ENCODE measurements at regions of chr14 and their contacts with region 1.

Region 1: GRCh38 chr14:47917345-47917954 is 242.0 kb upstream of the MDGA2 start:
- DNase-seq: no peak
- ATAC-seq: no peak
- H3K4me3 ChIP-seq: no peak overlapping the region
- H3K27ac ChIP-seq: no peak overlapping the region
- H3K4me1 ChIP-seq: no peaks in the 10 kb centered on the region
- H3K27me3 ChIP-seq: no peaks in the 10 kb centered on the region

Region 2: GRCh38 chr14:47179906-47180305 is 737.5 kb before region 1 on chr14:
- intact Hi-C with region 1: no loop called
- DNase-seq: no peak
- ATAC-seq: no peak
- H3K4me3 ChIP-seq: no peak overlapping the region
- H3K27ac ChIP-seq: no peak overlapping the region
- H3K4me1 ChIP-seq: no peaks in the 10 kb centered on the region
- H3K27me3 ChIP-seq: no peaks in the 10 kb centered on the region

Region 3: GRCh38 chr14:47389535-47389934 is 527.9 kb before region 1 on chr14:
- intact Hi-C with region 1: no loop called
- DNase-seq: no peak
- ATAC-seq: no peak
- H3K4me3 ChIP-seq: no peak overlapping the region
- H3K27ac ChIP-seq: no peak overlapping the region
- H3K4me1 ChIP-seq: no peaks in the 10 kb centered on the region
- H3K27me3 ChIP-seq: no peaks in the 10 kb centered on the region

Region 4: DNA sequence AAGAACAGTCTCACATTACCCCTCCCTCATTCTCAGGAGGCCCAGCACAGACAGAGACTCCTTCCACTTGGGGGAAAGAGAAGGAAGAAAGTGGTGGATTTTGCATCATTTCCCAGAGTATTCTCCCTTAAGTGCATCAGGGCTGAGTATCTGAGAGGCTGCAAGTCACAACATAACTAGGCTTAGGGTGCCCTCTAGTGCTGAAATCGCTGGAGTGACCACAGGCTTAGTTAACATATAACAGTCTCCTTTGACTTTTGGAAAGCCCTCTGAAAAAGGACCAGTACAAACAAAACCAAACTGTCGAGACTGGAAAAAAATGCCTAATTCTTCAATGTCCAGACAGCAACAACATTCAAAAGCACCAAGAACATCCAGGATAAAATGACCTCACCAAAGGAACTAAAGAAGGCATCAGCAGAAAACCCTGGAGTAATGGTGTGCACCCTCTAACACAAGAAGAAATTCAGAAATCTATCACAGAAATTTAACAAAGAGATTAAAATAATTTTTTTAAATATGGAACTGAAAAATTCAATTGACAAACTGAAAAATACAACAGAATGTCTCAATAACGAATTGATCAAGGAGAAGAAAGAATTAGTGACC is 1256.4 kb after region 1 on chr14:
- intact Hi-C with region 1: loop called in 1 of 2 experiments (anchors 5 kb)
- DNase-seq: no peak
- ATAC-seq: no peak
- H3K4me3 ChIP-seq: no peak overlapping the region
- H3K27ac ChIP-seq: no peak overlapping the region
- H3K4me1 ChIP-seq: no peaks in the 10 kb centered on the region
- H3K27me3 ChIP-seq: no peaks in the 10 kb centered on the region